ENCODE measurements at regions of chr22 and their contacts with region 1.

Region 1: GRCh38 chr22:31556627-31557203 is 60.4 kb downstream of the SFI1 start:
- DNase-seq: peak in 2 of 9 experiments; percentile 20 to 41
- ATAC-seq: peak; percentile 65
- H3K4me3 ChIP-seq: no peak overlapping the region
- H3K4me3 Mint-ChIP-seq: no peak overlapping the region
- H3K27ac ChIP-seq: no peak overlapping the region
- H3K27ac Mint-ChIP-seq: no peak overlapping the region
- H3K4me1 ChIP-seq: no peaks in the 10 kb centered on the region
- H3K4me1 Mint-ChIP-seq: peaks cover 12% of the 10 kb centered on the region
- H3K27me3 ChIP-seq: no peaks in the 10 kb centered on the region
- H3K27me3 Mint-ChIP-seq: no peaks in the 10 kb centered on the region
- CTCF ChIP-seq: no peak

Region 2: DNA sequence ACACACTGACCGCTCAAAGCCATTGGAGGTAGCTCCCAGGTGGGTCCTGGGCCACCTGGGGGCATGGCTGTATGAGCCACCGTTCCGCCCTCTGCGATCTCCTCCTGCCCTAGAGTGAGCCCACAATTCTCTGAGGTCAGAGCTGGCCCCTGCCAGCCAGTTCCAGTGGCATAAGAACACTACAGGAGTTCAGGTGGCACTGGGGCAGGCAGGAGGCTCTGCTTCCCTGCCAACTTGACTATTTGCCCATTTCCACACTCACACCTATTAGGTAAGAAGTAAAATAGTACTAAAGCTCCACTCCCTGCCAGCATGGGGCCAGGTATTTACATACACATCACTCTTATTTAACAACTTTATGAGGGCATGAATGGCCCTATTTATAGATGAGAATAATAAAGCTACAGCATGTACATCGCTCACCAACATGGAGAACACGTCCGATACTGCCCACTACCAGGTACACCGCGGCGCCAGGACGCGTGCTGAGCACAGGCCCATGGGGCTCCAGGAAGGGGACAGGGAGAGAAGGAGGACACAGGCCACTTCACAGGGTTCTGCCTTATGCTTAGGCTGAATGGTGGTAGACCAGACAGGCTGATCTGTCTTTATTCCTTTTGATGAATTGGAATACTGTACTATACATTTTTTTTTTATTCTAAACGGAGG is 79.1 kb after region 1 on chr22:
- CTCF ChIA-PET with region 1: interaction called, 24 read pairs
- POLR2A ChIA-PET with region 1: no interaction called
- intact Hi-C with region 1: loop called (anchors 1 kb)
- DNase-seq: peak in 1 of 9 experiments; percentile 6
- ATAC-seq: no peak
- H3K4me3 ChIP-seq: no peak overlapping the region
- H3K4me3 Mint-ChIP-seq: no peak overlapping the region
- H3K27ac ChIP-seq: no peak overlapping the region
- H3K27ac Mint-ChIP-seq: peak overlapping the region; percentile 60
- H3K4me1 ChIP-seq: peaks cover 33% of the 10 kb centered on the region
- H3K4me1 Mint-ChIP-seq: peaks cover 42% of the 10 kb centered on the region
- H3K27me3 ChIP-seq: no peaks in the 10 kb centered on the region
- H3K27me3 Mint-ChIP-seq: no peaks in the 10 kb centered on the region
- CTCF ChIP-seq: no peak